ENCODE measurements at regions of chr3 and their contacts with region 1.

Region 1: DNA sequence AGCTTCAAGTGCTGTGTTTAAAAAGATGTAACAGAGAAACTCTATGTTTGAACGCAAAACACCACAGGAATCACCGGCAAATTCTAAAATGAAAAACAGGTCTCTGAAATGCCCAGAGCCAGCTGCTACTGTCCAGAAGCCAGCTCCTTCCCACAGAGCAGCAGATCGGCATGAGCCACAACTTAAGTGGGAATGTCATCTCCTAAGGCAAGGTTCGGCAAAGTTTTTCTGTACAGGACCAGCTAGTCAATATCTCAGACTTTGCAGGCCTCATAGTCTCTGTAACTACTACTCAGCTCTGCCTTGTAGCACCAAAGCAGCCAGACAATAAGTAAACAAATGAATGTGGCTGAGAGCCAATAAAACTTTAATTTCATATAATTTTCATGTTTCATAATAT is 4.9 kb downstream of the PLOD2 start:
- DNase-seq: no peak
- H3K4me3 ChIP-seq: peak overlapping the region; percentile 38
- CTCF ChIP-seq: no peak

Region 2: DNA sequence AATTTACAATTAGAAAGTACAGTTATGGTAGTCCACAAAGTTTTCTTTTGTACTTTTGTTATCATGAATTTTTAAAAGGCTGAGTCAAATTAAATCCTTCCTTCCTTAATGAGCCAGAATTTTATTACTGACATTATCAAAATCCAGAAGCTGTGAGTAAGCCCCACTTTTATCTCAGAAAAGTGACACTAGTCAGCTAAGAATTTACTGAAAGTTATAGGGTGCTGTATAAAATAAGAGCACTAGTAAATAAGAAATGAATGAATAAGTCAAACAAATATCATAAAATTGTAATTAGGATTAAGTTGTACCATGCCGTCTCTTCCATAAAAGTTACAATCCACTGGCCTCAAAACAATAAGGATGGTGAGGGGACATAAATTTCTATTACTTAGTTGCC is 10.5 kb before region 1 on chr3:
- CTCF ChIA-PET with region 1: interaction called, 21 read pairs
- POLR2A ChIA-PET with region 1: interaction called, 5 read pairs
- DNase-seq: no peak
- H3K4me3 ChIP-seq: no peak overlapping the region
- CTCF ChIP-seq: no peak

Region 3: DNA sequence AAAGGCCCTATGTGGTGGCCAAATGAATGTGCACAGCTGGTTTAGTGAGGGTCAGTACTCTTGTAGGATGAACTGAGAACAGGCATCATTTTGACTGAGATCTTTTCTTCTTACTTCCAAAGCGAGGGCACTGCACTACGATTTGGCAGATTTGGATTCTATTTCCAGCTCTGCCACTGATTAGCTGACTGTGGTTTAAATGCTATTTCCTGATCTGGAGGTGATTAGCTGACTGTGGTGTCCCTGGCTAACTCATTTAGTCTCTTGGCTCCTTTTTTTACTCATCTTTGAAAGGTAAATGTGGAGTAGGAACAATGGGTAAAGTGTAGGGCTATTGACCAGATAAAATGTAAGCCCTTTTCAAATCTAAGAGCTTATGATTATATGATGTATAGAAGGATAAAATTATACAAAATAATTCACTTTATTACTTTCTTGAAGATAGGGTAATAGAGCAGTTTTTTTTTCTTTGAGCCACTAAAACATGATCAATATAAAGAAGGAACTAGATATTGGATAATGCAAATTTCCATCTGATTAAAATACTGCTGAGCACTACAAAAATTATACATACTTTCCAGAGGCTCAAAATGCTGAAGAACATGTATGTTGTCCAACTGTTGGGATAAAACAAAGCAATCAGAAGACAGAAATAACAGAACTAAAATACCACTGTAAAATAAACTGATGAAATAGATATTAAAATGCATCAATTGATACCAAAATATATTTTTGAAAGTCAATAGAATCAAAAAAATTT is 44.5 kb after region 1 on chr3:
- CTCF ChIA-PET with region 1: no interaction called
- POLR2A ChIA-PET with region 1: no interaction called
- DNase-seq: no peak
- H3K4me3 ChIP-seq: no peak overlapping the region
- CTCF ChIP-seq: no peak

Region 4: DNA sequence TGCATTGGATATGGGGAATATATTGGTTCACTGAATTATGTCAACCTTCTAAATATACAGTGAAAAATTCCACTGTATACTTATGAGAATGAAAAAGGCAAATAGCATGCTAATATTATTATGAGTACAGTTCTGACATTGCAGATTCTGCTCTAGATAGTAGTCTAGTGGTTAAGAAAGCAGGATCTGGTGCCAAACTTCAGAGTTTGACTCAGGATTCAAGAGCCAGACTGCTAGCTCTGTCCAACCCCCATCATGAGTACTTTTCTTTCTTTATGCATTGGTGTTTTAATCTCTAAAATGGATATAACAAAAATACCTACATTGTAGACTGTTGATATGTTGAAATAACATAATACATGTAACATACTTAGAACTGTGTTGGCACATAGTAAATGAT is 152.1 kb after region 1 on chr3:
- CTCF ChIA-PET with region 1: no interaction called
- POLR2A ChIA-PET with region 1: no interaction called
- DNase-seq: peak; percentile 75
- H3K4me3 ChIP-seq: no peak overlapping the region
- CTCF ChIP-seq: no peak

Region 5: GRCh38 chr3:146692254-146692653 is 536.2 kb after region 1 on chr3:
- CTCF ChIA-PET with region 1: no interaction called
- POLR2A ChIA-PET with region 1: no interaction called
- DNase-seq: no peak
- H3K4me3 ChIP-seq: no peak overlapping the region
- CTCF ChIP-seq: no peak

Measured in AG04449 (cell line).